ENCODE measurements at regions of chr19 and their contacts with region 1.

Region 1: DNA sequence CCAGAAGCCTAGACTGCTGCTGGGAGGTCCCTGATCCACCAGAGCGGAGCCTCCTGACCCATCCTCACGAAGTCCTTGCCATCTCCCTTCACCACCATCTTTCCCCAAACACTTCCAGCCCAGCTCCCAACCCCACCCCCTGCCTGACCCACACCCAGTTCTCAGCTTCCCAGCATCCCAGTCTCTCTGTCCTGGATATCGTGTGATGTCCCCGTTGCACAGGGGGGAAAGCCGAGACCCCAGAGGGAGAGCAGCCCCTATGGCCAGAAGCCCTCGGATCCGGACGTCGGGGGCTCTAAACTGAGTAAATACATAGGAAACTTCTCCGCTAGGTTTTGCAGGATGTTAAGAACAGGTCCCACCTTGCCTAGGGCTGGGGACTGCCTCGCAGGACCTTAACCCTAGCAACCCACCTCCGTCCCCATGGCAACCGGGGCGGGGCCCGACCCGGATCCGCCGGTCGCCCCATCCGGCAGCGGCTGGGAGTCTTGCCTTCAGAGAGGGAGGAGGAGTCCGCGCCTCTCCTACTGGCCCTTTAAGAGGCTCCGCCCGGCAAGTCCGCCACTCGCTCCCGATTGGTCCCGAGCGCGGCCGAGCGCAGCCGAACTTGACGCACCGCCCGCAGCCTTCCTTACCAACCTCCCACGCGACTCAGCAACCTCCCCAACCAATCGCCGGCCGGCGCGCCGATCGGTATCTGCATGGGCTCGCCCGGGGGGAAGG is 451 bp upstream of the HMG20B start:
- DNase-seq: peak; percentile 99
- H3K4me3 Mint-ChIP-seq: peak overlapping the region; percentile 77
- H3K27ac Mint-ChIP-seq: peak overlapping the region; percentile 75
- H3K4me1 Mint-ChIP-seq: no peaks in the 10 kb centered on the region
- H3K27me3 Mint-ChIP-seq: peaks cover 2% of the 10 kb centered on the region

Region 2: GRCh38 chr19:3035542-3036118 is 536.7 kb before region 1 on chr19:
- intact Hi-C with region 1: loop called (anchors 2 kb)
- DNase-seq: peak; percentile 95
- H3K4me3 Mint-ChIP-seq: peak overlapping the region; percentile 94
- H3K27ac Mint-ChIP-seq: peak overlapping the region; percentile 98
- H3K4me1 Mint-ChIP-seq: peaks cover 18% of the 10 kb centered on the region
- H3K27me3 Mint-ChIP-seq: peaks cover 23% of the 10 kb centered on the region

Region 3: DNA sequence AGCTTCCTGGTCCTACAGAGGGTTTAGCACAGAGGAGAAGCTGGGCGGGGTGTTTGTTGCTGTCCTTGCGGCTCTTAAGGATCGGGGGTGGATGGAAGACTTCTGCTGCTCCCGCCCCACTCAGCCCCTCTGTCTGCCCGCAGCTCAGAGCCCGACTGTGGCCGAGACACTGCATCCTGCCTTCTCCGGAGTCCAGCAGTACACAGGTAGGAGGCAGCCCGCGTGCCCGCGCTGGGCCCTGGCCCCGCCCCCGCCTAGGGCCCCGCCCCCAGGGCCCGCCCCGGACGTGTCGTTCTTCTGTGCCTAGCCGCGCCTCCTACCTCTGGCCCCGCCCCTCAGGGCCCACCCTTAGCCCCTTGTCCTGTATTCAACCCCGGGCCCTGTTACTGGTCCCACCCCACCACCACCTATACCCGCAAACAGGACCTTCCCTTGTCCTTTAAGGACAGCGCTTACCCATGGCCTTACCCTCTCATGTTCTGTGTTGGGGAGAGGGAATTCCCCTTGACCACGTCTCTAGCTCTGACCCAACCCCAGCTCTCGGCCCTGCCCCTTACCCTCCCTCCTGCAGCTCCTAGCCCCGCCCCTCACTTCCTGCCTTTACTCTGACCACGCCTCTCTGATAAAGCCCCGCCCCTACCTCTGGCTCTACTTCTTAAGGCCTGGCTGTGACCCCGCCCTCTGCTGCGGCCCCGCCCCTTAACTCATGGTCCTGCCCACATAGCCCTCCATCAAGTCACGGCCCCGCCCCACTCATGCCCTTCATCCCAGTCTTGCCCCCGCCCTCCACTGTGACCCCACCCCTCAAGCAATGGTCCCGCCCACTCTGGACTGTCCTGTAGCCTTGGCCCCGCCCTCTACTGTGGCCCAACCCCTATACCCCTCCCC is 287.3 kb before region 1 on chr19:
- intact Hi-C with region 1: loop called (anchors 2 kb)
- DNase-seq: peak; percentile 50
- H3K4me3 Mint-ChIP-seq: no peak overlapping the region
- H3K27ac Mint-ChIP-seq: no peak overlapping the region
- H3K4me1 Mint-ChIP-seq: no peaks in the 10 kb centered on the region
- H3K27me3 Mint-ChIP-seq: peaks cover 14% of the 10 kb centered on the region

Region 4: DNA sequence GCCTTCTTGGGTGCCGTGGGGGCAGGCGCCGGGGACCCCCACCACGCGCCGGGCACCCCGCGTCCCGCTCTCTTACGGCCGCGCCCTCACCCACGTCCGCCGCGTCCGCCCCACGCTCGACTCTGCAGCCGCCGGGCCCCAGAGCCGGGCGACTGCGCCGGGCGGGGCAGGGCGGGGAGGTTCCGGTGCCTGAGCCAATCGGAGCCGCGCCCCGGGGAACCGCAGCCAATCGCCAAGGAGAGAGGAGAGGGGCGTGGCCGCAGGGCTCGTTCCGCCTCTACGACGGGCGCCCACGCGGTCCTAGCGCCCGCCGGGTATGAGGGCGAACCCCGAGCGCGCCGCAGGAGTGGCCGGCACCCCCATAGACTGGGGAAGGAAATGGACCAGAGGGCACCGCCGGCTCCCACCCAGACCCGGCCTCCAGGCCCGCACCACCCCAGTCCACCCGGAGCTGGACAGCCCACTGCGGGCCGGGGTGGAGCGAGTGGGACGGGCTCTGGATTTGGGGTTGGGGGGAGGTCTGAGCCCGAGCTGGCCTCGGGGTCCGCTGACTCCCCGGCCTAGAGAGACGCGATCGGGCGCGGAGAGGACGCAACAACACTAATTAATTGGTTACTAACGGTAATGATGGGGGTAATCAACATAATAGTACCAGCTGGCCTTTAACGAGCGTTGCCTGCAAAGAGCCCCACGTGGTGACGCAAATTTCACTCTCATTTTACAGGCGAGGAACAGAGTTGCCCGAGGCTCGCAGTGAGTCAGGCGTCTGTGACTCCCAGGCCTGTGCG is 14.6 kb before region 1 on chr19 and contains the start of gene MFSD12:
- intact Hi-C with region 1: loop called (anchors 1 kb)
- DNase-seq: peak; percentile 96
- H3K4me3 Mint-ChIP-seq: peak within 1 kb of the TSS; percentile 96
- H3K27ac Mint-ChIP-seq: peak within 1 kb of the TSS; percentile 84
- H3K4me1 Mint-ChIP-seq: peaks cover 32% of the 10 kb centered on the region
- H3K27me3 Mint-ChIP-seq: no peaks in the 10 kb centered on the region
- total RNA-seq, gene MFSD12: 126 and 136 TPM in 2 replicates

Region 5: GRCh38 chr19:3721131-3721886 is 149.0 kb after region 1 on chr19:
- intact Hi-C with region 1: loop called (anchors 1 kb)
- DNase-seq: peak; percentile 81
- H3K4me3 Mint-ChIP-seq: no peak overlapping the region
- H3K27ac Mint-ChIP-seq: no peak overlapping the region
- H3K4me1 Mint-ChIP-seq: no peaks in the 10 kb centered on the region
- H3K27me3 Mint-ChIP-seq: peaks cover 40% of the 10 kb centered on the region

Region 6: GRCh38 chr19:4342615-4343369 is 770.5 kb after region 1 on chr19:
- intact Hi-C with region 1: loop called (anchors 2 kb)
- DNase-seq: peak; percentile 92
- H3K4me3 Mint-ChIP-seq: peak overlapping the region; percentile 91
- H3K27ac Mint-ChIP-seq: peak overlapping the region; percentile 90
- H3K4me1 Mint-ChIP-seq: peaks cover 18% of the 10 kb centered on the region
- H3K27me3 Mint-ChIP-seq: no peaks in the 10 kb centered on the region

Measured in activated T-helper 1 cell treated with anti-CD3 and anti-CD28 coated beads, Interleukin-12 subunit alpha, Interleukin-12 subunit beta, Interleukin-2, Interleukin-4 antibody, amounts not matched to agents 30 ng/mL and 10 ng/mL and 1 ng/mL, durations not matched to agents 14 hours and 24 hours and 36 hours (primary cell).